ENCODE measurements at regions of chr1 and their contacts with region 1.

Region 1: GRCh38 chr1:202112839-202113672 is 9.7 kb upstream of the GPR37L1 start:
- DNase-seq: peak in 5 of 6 donors; percentile 69 to 81 (median 72)
- ATAC-seq: peak; percentile 36 to 56 (median 52)
- H3K4me3 ChIP-seq: no peak overlapping the region
- H3K27ac ChIP-seq: peak overlapping the region; percentile 44 to 95 (median 78)
- H3K4me1 ChIP-seq: peaks cover 23 to 44% (median 32%) of the 10 kb centered on the region in 3 donors
- H3K27me3 ChIP-seq: no peaks in the 10 kb centered on the region
- CTCF ChIP-seq: no peak

Region 2: DNA sequence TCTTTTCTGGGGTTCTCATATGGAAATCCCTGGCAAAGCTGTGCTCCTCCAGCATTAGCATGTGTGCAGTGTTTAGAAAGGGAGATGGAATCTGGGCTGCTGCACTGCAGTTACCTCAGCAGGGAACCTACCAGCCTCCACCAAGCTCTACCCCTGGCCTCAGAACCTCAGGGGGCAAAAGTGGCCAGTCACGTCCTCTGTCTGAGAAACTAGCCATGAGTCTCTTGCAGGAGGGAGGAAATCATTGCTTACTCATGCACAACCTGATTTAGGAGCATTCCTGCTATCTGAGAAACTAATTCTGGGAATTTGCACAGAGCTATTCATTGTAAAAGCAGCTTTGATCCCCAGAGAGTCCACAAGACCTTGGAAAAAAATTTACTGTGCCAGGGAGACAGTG is 364.7 kb before region 1 on chr1:
- intact Hi-C with region 1: no loop called
- DNase-seq: no peak
- ATAC-seq: peak in 1 of 4 donors; percentile 38
- H3K4me3 ChIP-seq: no peak overlapping the region
- H3K27ac ChIP-seq: no peak overlapping the region
- H3K4me1 ChIP-seq: no peaks in the 10 kb centered on the region
- H3K27me3 ChIP-seq: no peaks in the 10 kb centered on the region
- CTCF ChIP-seq: no peak

Region 3: GRCh38 chr1:202009326-202010179 is 103.5 kb before region 1 on chr1:
- intact Hi-C with region 1: loop called in 2 of 3 experiments (anchors 5 to 10 kb)
- DNase-seq: peak; percentile 74 to 89 (median 80)
- ATAC-seq: peak; percentile 61 to 72 (median 65)
- H3K4me3 ChIP-seq: peak overlapping the region in 2 of 4 donors; percentile 17 to 83
- H3K27ac ChIP-seq: peak overlapping the region; percentile 80 to 97 (median 88)
- H3K4me1 ChIP-seq: peaks cover 7 to 24% (median 12%) of the 10 kb centered on the region in 3 donors
- H3K27me3 ChIP-seq: no peaks in the 10 kb centered on the region
- CTCF ChIP-seq: peak; percentile 83 to 91 (median 86)

Region 4: DNA sequence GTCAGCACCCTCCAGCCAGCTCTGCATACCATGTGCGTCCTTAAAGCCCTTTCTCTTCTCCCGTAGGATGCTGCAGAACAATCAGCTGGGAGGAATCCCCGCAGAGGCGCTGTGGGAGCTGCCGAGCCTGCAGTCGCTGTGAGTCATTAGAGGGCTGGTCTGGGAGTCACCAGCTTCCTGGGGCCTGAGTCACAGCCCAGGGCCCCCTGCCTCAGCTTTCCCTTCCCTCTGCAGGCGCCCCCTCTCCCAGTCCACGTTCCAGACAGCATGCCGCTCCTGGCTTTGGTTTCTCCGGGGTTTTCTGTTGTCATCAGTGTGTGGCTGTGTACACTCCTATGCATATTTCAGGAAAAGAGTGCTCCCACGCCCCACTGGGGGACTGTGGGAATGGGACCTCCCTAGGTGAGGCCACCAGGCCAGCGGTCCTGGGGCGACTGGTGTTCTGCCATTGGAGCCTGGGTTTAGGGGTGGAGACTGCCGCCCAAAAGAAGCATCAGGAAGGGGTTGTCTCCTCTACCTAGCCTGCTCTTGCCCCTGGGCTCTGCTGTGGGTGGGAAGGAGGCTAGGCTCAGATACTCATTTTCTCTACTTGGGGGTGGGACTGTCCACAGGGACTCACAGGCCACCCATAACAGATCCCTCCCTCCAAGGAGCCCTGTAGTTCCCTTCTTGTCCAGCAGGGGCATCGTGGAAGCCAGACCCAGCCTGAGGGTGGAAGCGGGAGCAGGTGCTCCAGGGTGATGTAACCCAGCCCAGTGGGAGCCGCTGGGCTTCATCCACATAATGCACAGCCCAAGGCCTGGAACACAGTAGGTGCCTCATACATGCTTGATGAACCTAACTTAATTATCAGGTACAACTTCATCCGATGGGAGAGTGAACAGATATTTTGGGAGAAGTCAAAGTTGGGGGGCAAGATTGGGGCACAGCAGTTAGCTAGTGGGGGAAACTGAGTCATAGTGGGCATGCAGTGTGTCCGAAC is 123.1 kb after region 1 on chr1:
- intact Hi-C with region 1: no loop called
- DNase-seq: peak; percentile 47 to 88 (median 84)
- ATAC-seq: peak; percentile 94 to 96 (median 96)
- H3K4me3 ChIP-seq: no peak overlapping the region
- H3K27ac ChIP-seq: no peak overlapping the region
- H3K4me1 ChIP-seq: no peaks in the 10 kb centered on the region
- H3K27me3 ChIP-seq: no peaks in the 10 kb centered on the region
- CTCF ChIP-seq: peak; percentile 88 to 96 (median 90)